ENCODE measurements at regions of chr2 and their contacts with region 1.

Region 1: GRCh38 chr2:222707689-222708525 is 36.4 kb downstream of the MOGAT1 start:
- DNase-seq: no peak
- H3K4me3 ChIP-seq: no peak overlapping the region
- H3K27ac ChIP-seq: no peak overlapping the region
- H3K4me1 ChIP-seq: peaks cover 16% of the 10 kb centered on the region
- H3K27me3 ChIP-seq: no peaks in the 10 kb centered on the region
- CTCF ChIP-seq: peak; percentile 48 to 93 (median 86)
- POLR2A ChIP-seq: no peak

Region 2: GRCh38 chr2:222572751-222573174 is 135.1 kb before region 1 on chr2:
- intact Hi-C with region 1: no loop called
- DNase-seq: no peak
- H3K4me3 ChIP-seq: no peak overlapping the region
- H3K27ac ChIP-seq: peak overlapping the region; percentile 18
- H3K4me1 ChIP-seq: peaks cover 17% of the 10 kb centered on the region
- H3K27me3 ChIP-seq: no peaks in the 10 kb centered on the region
- CTCF ChIP-seq: no peak
- POLR2A ChIP-seq: no peak

Region 3: GRCh38 chr2:222745836-222746559 is 38.1 kb after region 1 on chr2:
- intact Hi-C with region 1: loop called (anchors 2 kb)
- DNase-seq: no peak
- H3K4me3 ChIP-seq: no peak overlapping the region
- H3K27ac ChIP-seq: no peak overlapping the region
- H3K4me1 ChIP-seq: peaks cover 19% of the 10 kb centered on the region
- H3K27me3 ChIP-seq: no peaks in the 10 kb centered on the region
- CTCF ChIP-seq: no peak
- POLR2A ChIP-seq: no peak

Region 4: DNA sequence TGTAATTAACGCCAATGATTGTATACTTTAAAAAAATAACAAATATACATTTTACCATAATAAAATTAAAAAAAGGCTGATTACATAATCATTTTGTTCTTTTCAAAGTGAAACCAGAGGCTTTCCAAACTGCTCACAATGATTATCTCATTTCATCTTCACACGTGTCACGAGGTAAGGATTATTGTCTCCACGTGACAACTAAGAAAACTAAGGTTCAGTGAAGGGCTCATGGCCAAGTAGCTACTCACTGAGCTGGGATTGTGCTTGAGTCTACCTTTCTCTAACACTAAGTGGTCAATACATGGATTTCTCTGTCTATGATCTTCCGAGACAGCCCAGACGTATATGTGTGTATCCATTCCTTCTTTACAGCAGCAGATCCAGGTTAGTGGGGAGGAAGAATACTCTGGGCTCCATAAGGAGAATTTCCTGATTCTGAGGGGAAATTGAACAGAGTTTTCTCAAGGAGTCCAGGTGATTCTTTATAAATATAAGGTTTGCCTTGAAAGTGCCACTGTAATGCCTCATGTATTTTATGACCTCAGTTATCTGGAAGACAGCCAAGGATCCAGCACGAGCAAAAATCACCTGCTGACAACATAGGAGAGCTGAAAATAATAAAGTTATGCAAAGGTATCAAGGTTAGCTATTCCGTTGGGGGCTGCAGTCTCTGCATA is 127.4 kb after region 1 on chr2:
- intact Hi-C with region 1: no loop called
- DNase-seq: no peak
- H3K4me3 ChIP-seq: no peak overlapping the region
- H3K27ac ChIP-seq: no peak overlapping the region
- H3K4me1 ChIP-seq: no peaks in the 10 kb centered on the region
- H3K27me3 ChIP-seq: no peaks in the 10 kb centered on the region
- CTCF ChIP-seq: no peak
- POLR2A ChIP-seq: no peak

Region 5: DNA sequence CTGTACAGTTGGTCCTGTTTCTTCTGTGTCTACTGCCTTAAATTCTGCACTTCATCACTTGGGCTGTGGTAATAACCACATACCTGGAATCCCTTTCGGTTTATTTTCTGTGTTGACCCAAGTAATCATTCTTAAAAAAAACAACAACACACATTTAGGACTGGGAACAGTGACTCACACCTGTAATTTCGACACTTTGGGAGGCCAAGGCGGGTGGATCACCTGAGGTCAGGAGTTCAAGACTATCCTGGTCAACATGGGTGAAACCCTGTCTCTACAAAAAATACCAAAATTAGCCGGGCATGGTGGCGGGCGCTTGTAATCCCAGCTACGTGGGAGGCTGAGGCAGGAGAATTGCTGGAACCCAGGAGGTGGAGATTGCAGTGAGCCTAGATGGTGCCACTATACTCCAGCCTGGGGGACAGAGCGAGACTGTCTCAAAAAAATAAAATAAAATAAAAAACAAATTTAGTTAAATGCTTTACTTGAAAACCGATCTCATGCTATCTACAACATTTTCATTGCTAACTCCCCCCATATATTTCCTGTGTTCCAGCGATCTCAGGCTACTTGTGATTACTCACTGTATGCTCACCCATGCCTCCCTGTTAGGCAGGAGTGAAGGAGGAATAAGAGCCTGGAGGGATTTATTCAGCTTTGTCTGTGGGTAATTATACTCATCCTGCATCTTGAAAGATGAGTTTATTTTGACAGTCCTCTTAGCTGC is 171.1 kb after region 1 on chr2:
- intact Hi-C with region 1: no loop called
- DNase-seq: no peak
- H3K4me3 ChIP-seq: no peak overlapping the region
- H3K27ac ChIP-seq: no peak overlapping the region
- H3K4me1 ChIP-seq: peaks cover 13% of the 10 kb centered on the region
- H3K27me3 ChIP-seq: no peaks in the 10 kb centered on the region
- CTCF ChIP-seq: no peak
- POLR2A ChIP-seq: no peak

Region 6: DNA sequence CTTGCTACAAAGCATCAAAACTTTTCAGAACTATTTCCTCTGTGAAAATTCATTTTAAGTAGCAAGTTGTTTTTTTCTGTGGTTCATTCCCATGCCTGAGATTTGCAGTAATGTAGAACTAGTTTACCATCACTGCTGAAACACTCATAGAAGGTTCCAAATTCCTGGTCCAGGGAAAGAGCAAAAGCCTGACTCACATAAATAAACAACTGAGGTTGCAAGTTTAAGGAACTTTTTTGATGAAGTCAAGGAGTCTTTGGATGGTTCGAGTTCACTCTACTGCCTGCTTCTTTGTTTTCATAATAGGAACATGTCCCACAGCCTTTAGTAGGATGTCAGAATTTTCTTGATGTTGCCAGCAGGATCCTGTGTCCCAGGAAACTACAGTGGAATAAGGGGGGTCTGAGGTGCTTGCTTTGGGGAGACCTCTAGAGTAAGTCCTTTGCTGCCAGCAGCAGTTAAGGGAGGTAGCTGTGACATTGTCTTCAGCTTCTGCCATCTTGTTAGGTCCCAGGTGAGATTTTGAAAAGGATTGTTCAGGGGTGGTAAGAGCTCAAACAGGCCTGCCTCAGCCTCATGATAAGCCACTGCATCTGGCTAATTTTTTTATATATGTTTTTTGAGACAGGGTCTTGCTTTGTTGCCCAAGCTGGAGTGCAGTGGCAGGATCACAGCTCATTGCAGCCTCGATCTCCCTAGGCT is 196.8 kb after region 1 on chr2:
- intact Hi-C with region 1: loop called (anchors 5 kb)
- DNase-seq: no peak
- H3K4me3 ChIP-seq: no peak overlapping the region
- H3K27ac ChIP-seq: no peak overlapping the region
- H3K4me1 ChIP-seq: peaks cover 18% of the 10 kb centered on the region
- H3K27me3 ChIP-seq: no peaks in the 10 kb centered on the region
- CTCF ChIP-seq: no peak
- POLR2A ChIP-seq: no peak